IMR-90 (cell line): ENCODE measurements at regions of chr10 and their contacts with region 1.

Region 1: GRCh38 chr10:5233324-5233723 is 36.7 kb downstream of the AKR1C4 start:
- DNase-seq: no peak
- ATAC-seq: no peak
- H3K4me3 ChIP-seq: no peak overlapping the region
- H3K27ac ChIP-seq: no peak overlapping the region
- H3K4me1 ChIP-seq: no peaks in the 10 kb centered on the region
- H3K27me3 ChIP-seq: no peaks in the 10 kb centered on the region
- CTCF ChIP-seq: no peak
- POLR2A ChIP-seq: no peak
- RAD21 ChIP-seq: no peak

Region 2: GRCh38 chr10:5252177-5253015 is 19.1 kb after region 1 on chr10:
- CTCF ChIA-PET with region 1: no interaction called
- POLR2A ChIA-PET with region 1: no interaction called
- dilution Hi-C with region 1: no loop called
- in situ Hi-C with region 1: no loop called
- intact Hi-C with region 1: no loop called
- DNase-seq: peak; percentile 22
- ATAC-seq: peak; percentile 37; the same call in 1 of the 2 replicates
- H3K4me3 ChIP-seq: no peak overlapping the region
- H3K27ac ChIP-seq: no peak overlapping the region
- H3K4me1 ChIP-seq: no peaks in the 10 kb centered on the region
- H3K27me3 ChIP-seq: no peaks in the 10 kb centered on the region
- CTCF ChIP-seq: no peak
- POLR2A ChIP-seq: no peak
- RAD21 ChIP-seq: no peak

Region 3: GRCh38 chr10:5269791-5270190 is 36.5 kb after region 1 on chr10:
- CTCF ChIA-PET with region 1: no interaction called
- POLR2A ChIA-PET with region 1: no interaction called
- dilution Hi-C with region 1: no loop called
- in situ Hi-C with region 1: no loop called
- intact Hi-C with region 1: loop called (anchors 1 kb)
- DNase-seq: no peak
- ATAC-seq: no peak
- H3K4me3 ChIP-seq: no peak overlapping the region
- H3K27ac ChIP-seq: no peak overlapping the region
- H3K4me1 ChIP-seq: no peaks in the 10 kb centered on the region
- H3K27me3 ChIP-seq: no peaks in the 10 kb centered on the region
- CTCF ChIP-seq: no peak
- POLR2A ChIP-seq: no peak
- RAD21 ChIP-seq: no peak

Region 4: DNA sequence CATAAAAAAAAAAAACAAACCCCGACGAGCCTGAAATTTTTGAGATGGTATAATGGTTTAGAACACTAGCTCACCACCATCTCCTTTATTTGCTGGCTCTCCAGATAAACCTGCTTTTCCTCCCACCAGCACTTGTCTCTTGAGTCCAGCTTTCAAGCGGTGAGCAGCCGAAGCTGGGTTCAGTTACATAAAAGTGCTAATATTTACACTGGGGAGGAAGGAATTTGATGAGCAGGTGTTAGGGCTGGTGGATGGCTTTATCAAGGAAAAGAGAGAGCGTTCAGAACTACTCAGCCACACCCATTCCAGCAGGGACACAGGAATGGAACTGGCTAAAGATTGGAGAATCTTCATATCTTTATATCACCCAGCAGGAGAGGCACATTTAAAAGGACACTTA is 284.8 kb after region 1 on chr10:
- CTCF ChIA-PET with region 1: no interaction called
- POLR2A ChIA-PET with region 1: no interaction called
- dilution Hi-C with region 1: no loop called
- in situ Hi-C with region 1: no loop called
- intact Hi-C with region 1: no loop called
- DNase-seq: no peak
- ATAC-seq: no peak
- H3K4me3 ChIP-seq: no peak overlapping the region
- H3K27ac ChIP-seq: no peak overlapping the region
- H3K4me1 ChIP-seq: no peaks in the 10 kb centered on the region
- H3K27me3 ChIP-seq: peaks cover 25% of the 10 kb centered on the region
- CTCF ChIP-seq: no peak
- POLR2A ChIP-seq: no peak
- RAD21 ChIP-seq: no peak

Region 5: DNA sequence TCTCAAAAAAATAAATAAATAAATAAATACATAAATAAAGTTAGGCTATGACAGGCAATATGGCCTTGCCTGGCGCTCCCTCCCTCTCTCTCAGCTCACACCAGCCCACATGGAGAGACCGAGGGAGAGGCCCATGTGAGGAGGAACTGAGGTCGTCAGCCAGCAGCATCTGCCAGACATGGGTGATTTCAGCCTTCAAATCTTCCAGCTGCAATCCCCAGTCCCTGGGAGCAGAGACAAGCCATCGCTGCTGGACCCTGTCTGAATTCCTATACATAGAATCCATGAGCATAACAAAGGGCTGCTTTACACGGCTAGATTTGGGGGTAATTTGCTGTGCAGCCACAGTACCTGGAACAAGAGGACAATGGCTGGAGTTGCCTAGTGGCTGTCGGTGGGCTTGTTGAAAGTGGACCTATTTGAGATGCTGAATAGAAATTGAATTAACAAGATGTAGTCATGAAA is 620.8 kb after region 1 on chr10:
- CTCF ChIA-PET with region 1: no interaction called
- POLR2A ChIA-PET with region 1: no interaction called
- dilution Hi-C with region 1: no loop called
- in situ Hi-C with region 1: no loop called
- intact Hi-C with region 1: no loop called
- DNase-seq: no peak
- ATAC-seq: no peak
- H3K4me3 ChIP-seq: no peak overlapping the region
- H3K27ac ChIP-seq: no peak overlapping the region
- H3K4me1 ChIP-seq: no peaks in the 10 kb centered on the region
- H3K27me3 ChIP-seq: no peaks in the 10 kb centered on the region
- CTCF ChIP-seq: no peak
- POLR2A ChIP-seq: no peak
- RAD21 ChIP-seq: no peak